ENCODE measurements at regions of chr20 and their contacts with region 1.

Region 1: DNA sequence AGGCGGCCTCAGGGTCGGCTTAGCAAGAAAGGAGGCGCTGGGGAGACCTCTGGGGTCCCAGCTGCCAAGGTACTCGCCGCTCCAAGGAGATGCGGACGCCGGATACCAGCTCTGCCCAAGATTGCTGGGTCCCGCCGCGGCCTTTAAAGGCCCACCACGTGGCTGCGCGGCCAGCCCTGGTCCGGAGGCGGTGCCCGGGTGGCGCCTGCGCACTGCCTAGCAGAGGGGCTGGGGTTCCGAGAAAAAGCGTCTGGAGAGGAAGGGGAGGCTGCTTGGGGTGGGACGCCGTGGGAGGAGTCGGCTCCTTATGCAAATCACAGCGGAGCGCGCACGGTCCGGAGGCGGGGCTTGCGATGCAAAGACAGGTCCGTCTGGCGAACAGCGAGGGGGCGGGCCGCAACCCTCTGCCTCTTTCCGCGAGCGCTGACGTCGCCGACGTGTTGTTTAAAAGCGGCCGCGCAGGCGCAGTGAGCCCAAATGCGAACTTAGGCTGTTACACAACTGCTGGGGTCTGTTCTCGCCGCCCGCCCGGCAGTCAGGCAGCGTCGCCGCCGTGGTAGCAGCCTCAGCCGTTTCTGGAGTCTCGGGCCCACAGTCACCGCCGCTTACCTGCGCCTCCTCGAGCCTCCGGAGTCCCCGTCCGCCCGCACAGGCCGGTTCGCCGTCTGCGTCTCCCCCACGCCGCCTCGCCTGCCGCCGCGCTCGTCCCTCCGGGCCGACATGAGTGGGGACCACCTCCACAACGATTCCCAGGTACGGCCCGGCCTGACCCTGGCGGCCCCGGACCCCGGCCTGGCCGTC is at the start of gene TOP1:
- DNase-seq: peak; percentile 100
- ATAC-seq: peak; percentile 98
- H3K4me3 Mint-ChIP-seq: peak within 1 kb of the TSS; percentile 84
- H3K27ac Mint-ChIP-seq: peak within 1 kb of the TSS; percentile 92
- H3K4me1 Mint-ChIP-seq: peaks cover 45% of the 10 kb centered on the region
- H3K27me3 Mint-ChIP-seq: no peaks in the 10 kb centered on the region
- total RNA-seq, gene TOP1: 111 to 124 TPM

Region 2: DNA sequence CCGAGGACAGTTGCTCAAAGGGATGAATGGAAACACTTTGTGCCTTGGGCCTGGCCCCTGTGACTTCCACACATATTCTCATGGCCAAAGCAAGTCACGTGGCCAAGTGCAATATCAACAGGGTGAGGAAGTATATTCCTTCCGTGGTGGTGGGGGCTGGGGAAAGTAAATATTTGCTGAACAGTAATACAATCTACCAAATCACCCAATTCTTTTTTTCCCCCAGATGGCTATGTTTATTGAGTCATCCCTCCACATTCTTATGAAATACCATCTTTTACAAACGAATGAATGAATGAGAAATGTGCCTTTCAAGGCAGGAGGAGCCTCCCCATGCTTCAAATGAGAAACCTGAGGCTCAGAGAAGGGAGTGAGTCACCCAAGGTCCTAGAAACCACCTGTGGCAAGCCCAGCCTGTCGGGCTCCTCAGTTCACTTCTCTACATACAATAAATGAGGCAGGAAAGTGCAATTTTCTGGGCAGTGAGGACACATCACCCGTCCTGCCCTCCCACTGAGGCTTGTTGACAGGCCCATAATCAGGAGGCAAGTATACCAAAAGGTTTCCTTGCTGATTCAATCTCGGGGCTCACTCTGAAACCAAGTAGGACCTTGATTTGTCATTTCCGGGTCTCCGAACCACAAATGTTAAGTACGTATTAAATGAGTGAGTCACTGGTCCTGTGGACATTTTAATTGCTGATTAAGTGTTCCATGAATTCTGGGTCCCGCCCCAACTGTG is 25.2 kb before region 1 on chr20:
- CTCF ChIA-PET with region 1: interaction called, 3 read pairs
- POLR2A ChIA-PET with region 1: interaction called, 3 read pairs
- intact Hi-C with region 1: loop called (anchors 1 kb)
- DNase-seq: peak; percentile 83
- ATAC-seq: peak; percentile 89
- H3K4me3 Mint-ChIP-seq: peak overlapping the region; percentile 28
- H3K27ac Mint-ChIP-seq: peak overlapping the region; percentile 89
- H3K4me1 Mint-ChIP-seq: peaks cover 37% of the 10 kb centered on the region
- H3K27me3 Mint-ChIP-seq: no peaks in the 10 kb centered on the region

Region 3: DNA sequence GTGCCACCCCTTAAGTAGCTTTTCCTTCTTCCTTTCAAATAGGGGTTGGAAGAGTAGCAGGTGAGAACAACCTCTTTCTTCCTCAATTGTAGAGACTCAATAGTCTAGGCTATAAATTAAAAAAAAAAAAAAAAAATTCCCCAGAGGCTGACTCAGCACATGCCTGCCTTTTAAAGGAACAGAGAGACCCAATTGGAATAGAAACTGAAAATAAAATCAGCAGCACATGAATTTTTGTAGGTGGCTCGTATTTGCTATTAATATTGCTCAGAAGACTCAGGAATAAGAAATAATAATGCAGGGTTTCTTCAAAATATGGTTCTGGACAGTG is 19.4 kb after region 1 on chr20:
- CTCF ChIA-PET with region 1: interaction called, 39 read pairs
- POLR2A ChIA-PET with region 1: interaction called, 4 read pairs
- intact Hi-C with region 1: loop called (anchors 1 kb)
- DNase-seq: no peak
- ATAC-seq: peak; percentile 46
- H3K4me3 Mint-ChIP-seq: peak overlapping the region; percentile 72
- H3K27ac Mint-ChIP-seq: peak overlapping the region; percentile 87
- H3K4me1 Mint-ChIP-seq: peaks cover 89% of the 10 kb centered on the region
- H3K27me3 Mint-ChIP-seq: no peaks in the 10 kb centered on the region

Region 4: GRCh38 chr20:41317536-41318270 is 289.2 kb after region 1 on chr20 and contains the start of gene ZHX3:
- CTCF ChIA-PET with region 1: no interaction called
- POLR2A ChIA-PET with region 1: no interaction called
- intact Hi-C with region 1: loop called in 1 of 2 experiments (anchors 1 kb)
- DNase-seq: peak; percentile 98
- ATAC-seq: peak; percentile 99
- H3K4me3 Mint-ChIP-seq: peak within 1 kb of the TSS; percentile 84
- H3K27ac Mint-ChIP-seq: peak within 1 kb of the TSS; percentile 66
- H3K4me1 Mint-ChIP-seq: peaks cover 31% of the 10 kb centered on the region
- H3K27me3 Mint-ChIP-seq: no peaks in the 10 kb centered on the region
- total RNA-seq, gene ZHX3: 12.8 to 15.4 TPM

Region 5: DNA sequence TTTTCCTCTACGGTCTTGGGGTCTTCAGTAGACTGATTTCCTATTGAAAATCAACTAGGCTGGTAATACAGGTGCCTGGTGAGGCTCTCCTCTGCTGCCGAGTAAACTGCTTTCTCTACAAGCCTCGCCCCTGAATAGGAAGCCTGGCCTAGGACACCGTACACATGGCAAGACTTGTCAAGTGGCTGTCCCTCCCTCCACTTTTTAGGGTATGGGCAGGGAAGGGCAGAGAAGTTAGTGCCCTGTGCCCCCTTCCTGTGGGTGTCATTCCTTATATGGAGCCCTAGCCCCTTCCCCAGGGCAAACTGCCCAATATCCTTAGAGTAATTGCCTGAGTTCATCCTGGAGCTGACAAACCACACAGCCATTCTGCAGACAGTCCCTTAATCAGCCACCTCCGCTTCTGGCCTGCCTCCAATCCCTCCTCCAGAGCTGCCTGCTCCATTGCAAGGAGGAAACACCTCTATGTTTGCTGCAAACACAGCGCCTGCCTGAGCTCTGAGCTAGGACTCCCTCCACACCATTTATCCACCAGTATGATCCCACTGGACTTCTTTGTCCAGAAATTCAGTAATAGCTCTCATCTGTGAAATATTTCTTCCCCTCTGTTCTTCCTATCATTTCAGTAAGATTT is 496.5 kb after region 1 on chr20:
- CTCF ChIA-PET with region 1: no interaction called
- POLR2A ChIA-PET with region 1: no interaction called
- intact Hi-C with region 1: no loop called
- DNase-seq: no peak
- ATAC-seq: no peak
- H3K4me3 Mint-ChIP-seq: no peak overlapping the region
- H3K27ac Mint-ChIP-seq: peak overlapping the region; percentile 9
- H3K4me1 Mint-ChIP-seq: peaks cover 30% of the 10 kb centered on the region
- H3K27me3 Mint-ChIP-seq: no peaks in the 10 kb centered on the region

Region 6: GRCh38 chr20:41693136-41693979 is 664.8 kb after region 1 on chr20:
- CTCF ChIA-PET with region 1: no interaction called
- POLR2A ChIA-PET with region 1: no interaction called
- intact Hi-C with region 1: loop called in 1 of 2 experiments (anchors 1 kb)
- DNase-seq: peak; percentile 88
- ATAC-seq: peak; percentile 90
- H3K4me3 Mint-ChIP-seq: peak overlapping the region; percentile 90
- H3K27ac Mint-ChIP-seq: peak overlapping the region; percentile 94
- H3K4me1 Mint-ChIP-seq: peaks cover 13% of the 10 kb centered on the region
- H3K27me3 Mint-ChIP-seq: peaks cover 2% of the 10 kb centered on the region

Measured in activated CD4-positive, alpha-beta T cell treated with anti-CD3 and anti-CD28 coated beads for 36 hours (primary cell).